SK-N-SH (cell line): ENCODE measurements at regions of chr2 and their contacts with region 1.

Region 1: DNA sequence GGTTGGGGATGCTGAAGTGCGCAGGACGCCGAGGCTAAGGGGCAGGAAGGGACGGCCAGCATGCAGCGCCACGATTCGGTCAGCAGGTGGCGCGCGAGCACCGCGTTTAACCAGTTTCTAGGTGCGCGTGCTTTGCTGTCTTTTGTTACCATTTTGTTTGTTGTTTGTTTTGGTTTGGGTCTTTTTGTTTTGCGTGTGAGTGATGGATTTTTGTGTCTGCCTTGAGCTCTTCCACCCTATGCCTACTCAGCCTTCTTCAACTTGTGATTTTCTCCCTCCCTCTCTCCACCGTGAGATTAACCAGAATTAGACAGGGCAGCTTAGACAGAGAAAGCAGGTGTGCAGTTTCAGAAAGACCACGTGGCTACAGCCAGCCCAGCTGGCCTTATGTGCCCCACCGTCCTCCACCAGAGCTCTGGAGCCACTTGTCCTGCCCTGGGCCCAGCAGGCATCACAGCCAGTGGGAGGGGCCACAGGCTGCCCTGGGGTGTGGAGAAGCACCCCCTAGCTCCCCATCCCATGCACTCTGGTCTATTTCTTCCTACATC is 180.2 kb downstream of the RNF144A start:
- DNase-seq: peak; percentile 89
- H3K4me3 ChIP-seq: peak overlapping the region; percentile 13 to 47; a peak in 2 of 4 replicates
- H3K27ac ChIP-seq: 0 out of 4 replicates have a peak overlapping the region, but pooled peaks of 1 of the 2 experiments have one; percentile 29
- H3K4me1 ChIP-seq: peaks cover 0 to 17% of the 10 kb centered on the region in 2 experiments; a peak in 2 of 4 replicates
- H3K27me3 ChIP-seq: no peaks in the 10 kb centered on the region
- CTCF ChIP-seq: peak; percentile 100
- EP300 ChIP-seq: no peak
- RAD21 ChIP-seq: peak; percentile 98

Region 2: DNA sequence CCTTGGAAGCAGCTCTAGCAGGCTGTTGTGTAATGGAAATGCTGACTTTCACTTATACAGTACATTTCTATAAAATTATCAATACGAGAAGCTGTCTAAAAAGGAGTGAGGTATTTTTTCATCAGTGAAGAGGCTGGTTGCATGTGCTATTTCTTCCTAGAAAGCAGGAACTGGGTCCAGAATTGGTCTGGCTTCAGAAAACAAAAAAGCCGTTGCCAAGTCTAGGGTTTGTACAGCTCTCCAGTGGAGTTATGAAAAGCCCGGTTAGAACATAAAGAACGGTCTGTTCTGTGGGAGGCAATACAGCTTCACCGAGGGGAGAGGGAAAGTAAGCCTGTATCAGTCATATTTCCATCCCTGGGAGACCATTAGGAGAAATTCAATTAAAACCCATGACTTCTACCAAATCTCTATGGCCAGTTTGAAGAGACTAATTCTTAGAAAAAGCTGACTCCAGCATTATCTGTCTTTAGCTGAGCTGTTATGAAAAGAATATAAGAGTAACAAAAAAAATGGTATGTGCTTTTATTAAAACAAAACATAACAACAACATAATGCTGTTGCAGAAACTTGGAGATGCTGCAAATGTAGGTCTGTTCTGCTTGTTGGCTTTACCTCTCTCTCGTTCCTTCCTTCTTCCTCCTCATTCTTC is 448.7 kb before region 1 on chr2:
- CTCF ChIA-PET with region 1: no interaction called
- POLR2A ChIA-PET with region 1: no interaction called
- DNase-seq: no peak
- H3K4me3 ChIP-seq: no peak overlapping the region
- H3K27ac ChIP-seq: no peak overlapping the region
- H3K4me1 ChIP-seq: peaks cover 0 to 4% of the 10 kb centered on the region in 2 experiments; a peak in 1 of 4 replicates
- H3K27me3 ChIP-seq: no peaks in the 10 kb centered on the region
- CTCF ChIP-seq: no peak
- EP300 ChIP-seq: no peak
- RAD21 ChIP-seq: no peak

Region 3: DNA sequence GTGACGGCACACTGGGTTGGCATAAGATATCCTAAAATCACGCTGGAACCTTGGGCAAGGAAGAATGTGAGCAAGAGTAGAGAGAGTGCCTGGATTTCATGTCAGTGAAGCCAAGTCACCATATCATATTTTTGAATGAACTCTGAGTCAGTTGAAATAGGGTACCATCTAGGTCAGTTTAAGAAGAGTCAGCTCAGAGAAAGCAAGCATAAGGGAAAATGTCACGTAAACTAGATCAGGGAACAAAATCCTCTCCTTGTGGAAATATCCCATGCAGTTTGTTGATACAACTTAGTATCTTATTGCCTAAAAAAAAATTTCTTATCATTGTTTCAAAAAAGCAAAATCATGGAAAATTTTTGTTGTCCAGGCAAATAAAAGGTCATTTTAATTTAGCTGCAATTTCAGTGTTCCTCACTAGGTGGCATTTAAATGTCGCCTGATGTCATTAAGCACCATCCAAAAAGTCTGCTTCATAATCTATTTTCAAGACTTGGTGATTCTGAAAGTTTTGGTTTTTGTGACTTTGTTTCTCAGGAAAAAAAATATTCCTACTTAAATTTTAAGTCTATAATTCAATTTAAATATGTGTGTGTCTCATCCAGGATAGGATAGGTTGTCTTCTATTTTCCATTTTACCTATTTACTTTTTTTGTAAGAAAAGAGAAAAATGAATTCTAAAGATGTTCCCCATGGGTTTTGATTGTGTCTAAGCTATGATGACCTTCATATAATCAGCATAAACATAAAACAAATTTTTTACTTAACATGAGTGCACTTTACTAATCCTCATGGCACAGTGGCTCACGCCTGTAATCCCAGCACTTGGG is 200.3 kb before region 1 on chr2:
- CTCF ChIA-PET with region 1: interaction called, 10 read pairs
- POLR2A ChIA-PET with region 1: no interaction called
- DNase-seq: peak; percentile 52
- H3K4me3 ChIP-seq: no peak overlapping the region; a peak in 1 of 4 replicates
- H3K27ac ChIP-seq: no peak overlapping the region
- H3K4me1 ChIP-seq: no peaks in the 10 kb centered on the region; a peak in 1 of 4 replicates
- H3K27me3 ChIP-seq: no peaks in the 10 kb centered on the region
- CTCF ChIP-seq: peak; percentile 90
- EP300 ChIP-seq: no peak
- RAD21 ChIP-seq: peak; percentile 97

Region 4: DNA sequence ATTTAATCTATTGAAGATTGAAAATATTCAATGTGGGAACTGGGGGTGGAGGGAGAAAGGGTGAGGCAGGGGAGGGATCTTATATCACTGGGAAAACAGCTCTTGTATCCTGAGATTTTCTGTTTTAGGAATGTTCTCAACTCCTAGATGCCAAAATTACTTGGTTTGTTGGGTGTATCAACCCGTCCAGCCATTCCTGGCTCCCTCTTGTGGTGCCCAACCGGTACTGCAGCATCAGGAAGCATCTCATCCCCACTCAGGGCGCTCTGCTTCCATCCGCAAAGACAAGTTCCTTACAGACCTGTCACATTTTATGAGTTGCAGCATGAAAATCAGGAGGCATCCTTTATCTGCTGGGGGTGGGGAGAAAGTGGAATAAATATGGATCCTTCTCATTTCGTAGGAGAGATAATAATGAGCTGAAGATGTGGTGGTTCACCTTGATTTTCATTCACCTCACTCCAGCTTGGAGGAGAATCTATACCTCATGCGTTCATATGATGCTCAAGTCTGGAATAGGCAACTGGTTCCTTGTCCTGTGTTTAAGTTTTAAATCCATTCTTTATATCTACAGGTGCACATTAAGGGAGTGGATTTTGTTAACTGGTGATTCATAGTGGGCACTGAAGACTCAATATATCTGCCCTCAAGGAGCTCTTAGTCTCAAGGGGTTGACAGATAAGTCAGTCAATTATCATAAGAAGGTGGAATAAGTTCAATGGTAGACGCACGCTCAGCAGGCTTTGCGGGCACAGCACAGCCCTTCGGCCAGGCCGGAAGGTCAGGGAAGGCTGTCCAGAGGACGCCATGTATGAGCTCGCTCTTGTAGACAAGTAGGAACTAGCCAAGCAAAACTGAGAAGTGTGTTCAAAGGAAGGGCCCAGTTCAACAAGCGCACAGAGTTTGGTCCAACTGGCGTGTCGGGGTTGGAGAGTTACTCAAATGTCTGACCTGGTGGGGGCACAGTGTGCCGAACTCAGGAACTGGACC is 52.9 kb before region 1 on chr2:
- CTCF ChIA-PET with region 1: interaction called, 27 read pairs
- POLR2A ChIA-PET with region 1: no interaction called
- DNase-seq: peak; percentile 81
- H3K4me3 ChIP-seq: no peak overlapping the region
- H3K27ac ChIP-seq: no peak overlapping the region; a peak in 1 of 4 replicates
- H3K4me1 ChIP-seq: peaks cover 0 to 3% of the 10 kb centered on the region in 2 experiments; a peak in 1 of 4 replicates
- H3K27me3 ChIP-seq: no peaks in the 10 kb centered on the region
- CTCF ChIP-seq: peak; percentile 98
- EP300 ChIP-seq: no peak
- RAD21 ChIP-seq: peak; percentile 75

Region 5: GRCh38 chr2:7071916-7072556 is 25.4 kb before region 1 on chr2:
- CTCF ChIA-PET with region 1: interaction called, 14 read pairs
- POLR2A ChIA-PET with region 1: no interaction called
- DNase-seq: no peak
- H3K4me3 ChIP-seq: no peak overlapping the region
- H3K27ac ChIP-seq: no peak overlapping the region
- H3K4me1 ChIP-seq: peaks cover 0 to 47% of the 10 kb centered on the region in 2 experiments; a peak in 2 of 4 replicates
- H3K27me3 ChIP-seq: no peaks in the 10 kb centered on the region
- CTCF ChIP-seq: no peak
- EP300 ChIP-seq: no peak
- RAD21 ChIP-seq: no peak

Region 6: DNA sequence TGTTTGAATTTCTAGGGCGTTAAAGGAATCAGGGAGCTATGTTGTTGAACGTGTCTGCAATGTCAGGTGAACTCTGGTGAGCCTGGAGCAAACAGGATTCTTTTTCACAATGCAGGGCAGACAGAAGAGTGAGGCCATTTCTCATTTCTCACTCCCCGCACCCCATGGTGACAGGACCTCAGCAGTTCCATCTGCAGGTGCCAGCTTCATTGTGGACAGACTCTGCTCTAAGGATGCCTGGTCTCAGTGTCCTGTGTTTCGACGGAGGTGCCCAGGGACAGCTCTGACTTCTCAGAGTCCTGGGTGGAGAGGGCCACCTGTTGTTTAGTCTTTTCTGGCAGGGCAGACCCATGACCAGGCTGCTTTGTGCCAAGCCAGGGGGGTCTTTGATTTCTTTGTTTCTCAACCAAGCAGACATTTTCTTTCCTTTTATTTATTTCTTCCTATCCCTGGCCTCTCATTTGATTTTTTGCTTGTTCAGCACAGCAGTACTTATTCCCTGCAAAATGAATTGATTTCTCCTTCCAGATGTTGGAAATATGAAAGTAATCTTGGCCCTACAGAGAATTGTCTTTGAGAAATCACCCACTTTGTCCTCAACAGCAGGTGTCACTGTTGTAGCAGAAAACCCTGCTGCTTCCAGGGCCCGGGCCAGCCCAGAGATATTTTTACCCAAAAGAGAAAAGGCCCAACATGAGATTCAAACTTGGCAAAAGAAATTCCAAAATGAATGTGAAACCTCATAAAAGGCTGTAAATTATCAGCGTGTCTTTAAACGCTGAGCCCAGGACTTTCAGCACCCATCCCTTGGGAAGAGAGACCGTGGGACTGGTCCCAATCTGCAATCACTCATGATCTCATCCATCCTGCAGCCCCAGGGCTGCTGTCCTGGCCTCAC is 21.4 kb after region 1 on chr2:
- CTCF ChIA-PET with region 1: interaction called, 106 read pairs
- POLR2A ChIA-PET with region 1: no interaction called
- DNase-seq: peak; percentile 73
- H3K4me3 ChIP-seq: no peak overlapping the region
- H3K27ac ChIP-seq: no peak overlapping the region
- H3K4me1 ChIP-seq: peaks cover 0 to 5% of the 10 kb centered on the region in 2 experiments; a peak in 2 of 4 replicates
- H3K27me3 ChIP-seq: no peaks in the 10 kb centered on the region
- CTCF ChIP-seq: peak; percentile 84
- EP300 ChIP-seq: no peak
- RAD21 ChIP-seq: peak; percentile 89

Region 7: DNA sequence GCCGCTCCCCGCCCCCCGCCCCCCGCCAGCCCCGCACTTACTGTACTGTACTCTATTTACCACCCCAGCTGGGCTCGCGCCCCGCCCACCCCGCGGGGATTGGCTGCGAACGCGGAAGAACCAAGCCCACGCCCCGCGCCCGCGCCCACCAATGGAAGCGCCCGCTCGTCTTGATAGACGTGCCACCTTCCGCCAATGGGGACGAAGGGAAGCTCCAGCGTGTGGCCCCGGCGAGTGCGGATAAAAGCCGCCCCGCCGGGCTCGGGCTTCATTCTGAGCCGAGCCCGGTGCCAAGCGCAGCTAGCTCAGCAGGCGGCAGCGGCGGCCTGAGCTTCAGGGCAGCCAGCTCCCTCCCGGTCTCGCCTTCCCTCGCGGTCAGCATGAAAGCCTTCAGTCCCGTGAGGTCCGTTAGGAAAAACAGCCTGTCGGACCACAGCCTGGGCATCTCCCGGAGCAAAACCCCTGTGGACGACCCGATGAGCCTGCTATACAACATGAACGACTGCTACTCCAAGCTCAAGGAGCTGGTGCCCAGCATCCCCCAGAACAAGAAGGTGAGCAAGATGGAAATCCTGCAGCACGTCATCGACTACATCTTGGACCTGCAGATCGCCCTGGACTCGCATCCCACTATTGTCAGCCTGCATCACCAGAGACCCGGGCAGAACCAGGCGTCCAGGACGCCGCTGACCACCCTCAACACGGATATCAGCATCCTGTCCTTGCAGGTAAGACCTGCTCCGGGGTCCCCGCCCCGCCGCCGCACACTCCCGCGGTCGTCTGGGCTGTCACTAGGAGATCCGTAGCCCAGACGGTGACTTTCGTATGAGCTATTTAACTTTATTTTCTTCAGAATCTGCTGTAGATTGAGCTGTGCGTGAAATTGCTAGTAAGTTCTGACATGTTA is 1584.6 kb after region 1 on chr2 and contains the start of gene ID2:
- CTCF ChIA-PET with region 1: interaction called, 22 read pairs
- POLR2A ChIA-PET with region 1: interaction called, 5 read pairs
- DNase-seq: peak; percentile 98
- H3K4me3 ChIP-seq: peak within 1 kb of the TSS; percentile 98 to 100
- H3K27ac ChIP-seq: peak within 1 kb of the TSS; percentile 97 to 99
- H3K4me1 ChIP-seq: peaks cover 12 to 48% of the 10 kb centered on the region in 2 experiments
- H3K27me3 ChIP-seq: no peaks in the 10 kb centered on the region
- CTCF ChIP-seq: no peak
- EP300 ChIP-seq: peak in 1 of 2 experiments; percentile 33; a peak in 1 of 4 replicates
- RAD21 ChIP-seq: peak; percentile 27; the same call in 1 of the 2 replicates
- polyA plus RNA-seq, gene ID2: 385 and 459 TPM in 2 replicates